Activated T-helper 1 cell treated with anti-CD3 and anti-CD28 coated beads, Interleukin-12 subunit alpha, Interleukin-12 subunit beta, Interleukin-2, Interleukin-4 antibody, amounts not matched to agents 30 ng/mL and 10 ng/mL and 1 ng/mL, durations not matched to agents 14 hours and 24 hours and 36 hours (primary cell): ENCODE measurements at regions of chr10 and their contacts with region 1.

Region 1: DNA sequence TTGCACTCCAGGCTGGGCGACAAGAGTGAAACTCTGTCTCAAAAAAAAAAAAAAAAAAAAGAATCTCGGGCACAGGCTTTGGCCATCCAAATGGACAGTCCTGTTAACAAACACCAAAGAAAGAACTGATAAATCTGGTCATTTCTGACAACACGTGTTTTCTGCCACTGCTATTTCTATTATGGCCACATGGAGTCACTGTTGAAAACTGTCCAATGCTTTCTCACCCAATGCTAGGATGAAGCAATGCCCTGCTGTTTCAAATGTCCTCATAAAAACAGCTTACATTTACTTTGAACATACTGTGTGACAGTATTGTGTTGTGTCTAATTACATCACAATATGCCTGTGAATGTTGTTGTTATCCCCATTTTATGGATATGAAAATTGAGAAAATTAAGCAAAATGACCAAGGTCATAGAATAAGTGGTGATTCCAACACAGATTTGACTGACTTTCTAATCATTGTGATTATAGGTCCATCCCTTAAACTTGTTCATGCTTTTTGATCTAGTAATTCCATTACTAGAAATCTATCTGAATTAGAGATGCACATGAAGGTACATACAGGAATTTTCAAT is 19.9 kb upstream of the MAP3K8 start:
- DNase-seq: no peak
- H3K4me3 Mint-ChIP-seq: no peak overlapping the region
- H3K27ac Mint-ChIP-seq: no peak overlapping the region
- H3K4me1 Mint-ChIP-seq: peaks cover 34% of the 10 kb centered on the region
- H3K27me3 Mint-ChIP-seq: no peaks in the 10 kb centered on the region

Region 2: GRCh38 chr10:30392564-30392990 is 21.5 kb before region 1 on chr10:
- intact Hi-C with region 1: loop called (anchors 1 kb)
- DNase-seq: peak; percentile 67
- H3K4me3 Mint-ChIP-seq: no peak overlapping the region
- H3K27ac Mint-ChIP-seq: no peak overlapping the region
- H3K4me1 Mint-ChIP-seq: peaks cover 15% of the 10 kb centered on the region
- H3K27me3 Mint-ChIP-seq: peaks cover 14% of the 10 kb centered on the region

Region 3: DNA sequence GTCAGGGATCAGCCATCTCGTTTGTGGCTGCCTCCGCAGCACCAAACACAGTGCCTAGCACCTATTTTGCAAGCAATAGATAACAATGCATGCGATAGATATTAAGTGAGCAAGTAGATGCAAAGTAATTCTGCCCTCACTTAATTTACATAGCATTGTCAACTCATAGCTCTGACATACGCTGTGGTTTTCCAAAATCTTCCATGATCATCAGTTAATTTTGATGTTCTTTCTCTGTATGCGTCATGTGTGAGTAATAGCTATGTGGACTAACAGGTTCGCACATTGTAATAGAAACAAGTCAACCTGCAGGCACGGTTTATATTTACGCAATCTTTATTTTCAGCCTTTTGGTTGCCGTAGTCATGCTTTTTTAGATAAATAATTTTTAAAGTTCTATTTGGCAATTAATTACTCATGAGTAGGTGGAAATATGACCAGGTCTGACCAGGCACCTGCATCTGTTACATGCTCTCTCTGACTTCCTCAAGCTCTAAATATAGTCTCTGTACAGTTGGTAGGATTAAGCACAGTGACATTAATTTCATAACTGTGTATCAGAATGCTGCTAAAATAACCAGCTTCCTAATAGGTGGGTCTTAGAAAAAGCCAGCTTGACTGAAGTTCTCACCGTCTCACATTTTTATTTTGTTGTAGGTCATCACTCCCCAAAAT is 33.2 kb after region 1 on chr10:
- intact Hi-C with region 1: loop called (anchors 5 kb)
- DNase-seq: no peak
- H3K4me3 Mint-ChIP-seq: no peak overlapping the region
- H3K27ac Mint-ChIP-seq: peak overlapping the region; percentile 73
- H3K4me1 Mint-ChIP-seq: peaks cover 55% of the 10 kb centered on the region
- H3K27me3 Mint-ChIP-seq: no peaks in the 10 kb centered on the region